ENCODE measurements at regions of chr1 and their contacts with region 1.

Region 1: GRCh38 chr1:150995896-150996295 is 10.8 kb downstream of the MINDY1 start:
- DNase-seq: peak; percentile 36
- H3K4me3 Mint-ChIP-seq: no peak overlapping the region
- H3K27ac Mint-ChIP-seq: peak overlapping the region; percentile 41
- H3K4me1 Mint-ChIP-seq: peaks cover 25% of the 10 kb centered on the region
- H3K27me3 Mint-ChIP-seq: no peaks in the 10 kb centered on the region

Region 2: GRCh38 chr1:150021191-150021694 is 974.7 kb before region 1 on chr1:
- CTCF ChIA-PET with region 1: no interaction called
- intact Hi-C with region 1: no loop called
- DNase-seq: no peak
- H3K4me3 Mint-ChIP-seq: no peak overlapping the region
- H3K27ac Mint-ChIP-seq: no peak overlapping the region
- H3K4me1 Mint-ChIP-seq: no peaks in the 10 kb centered on the region
- H3K27me3 Mint-ChIP-seq: no peaks in the 10 kb centered on the region

Region 3: GRCh38 chr1:150464422-150464826 is 531.5 kb before region 1 on chr1:
- CTCF ChIA-PET with region 1: no interaction called
- intact Hi-C with region 1: loop called (anchors 5 kb)
- DNase-seq: peak; percentile 79
- H3K4me3 Mint-ChIP-seq: no peak overlapping the region
- H3K27ac Mint-ChIP-seq: peak overlapping the region; percentile 41
- H3K4me1 Mint-ChIP-seq: peaks cover 2% of the 10 kb centered on the region
- H3K27me3 Mint-ChIP-seq: no peaks in the 10 kb centered on the region

Region 4: DNA sequence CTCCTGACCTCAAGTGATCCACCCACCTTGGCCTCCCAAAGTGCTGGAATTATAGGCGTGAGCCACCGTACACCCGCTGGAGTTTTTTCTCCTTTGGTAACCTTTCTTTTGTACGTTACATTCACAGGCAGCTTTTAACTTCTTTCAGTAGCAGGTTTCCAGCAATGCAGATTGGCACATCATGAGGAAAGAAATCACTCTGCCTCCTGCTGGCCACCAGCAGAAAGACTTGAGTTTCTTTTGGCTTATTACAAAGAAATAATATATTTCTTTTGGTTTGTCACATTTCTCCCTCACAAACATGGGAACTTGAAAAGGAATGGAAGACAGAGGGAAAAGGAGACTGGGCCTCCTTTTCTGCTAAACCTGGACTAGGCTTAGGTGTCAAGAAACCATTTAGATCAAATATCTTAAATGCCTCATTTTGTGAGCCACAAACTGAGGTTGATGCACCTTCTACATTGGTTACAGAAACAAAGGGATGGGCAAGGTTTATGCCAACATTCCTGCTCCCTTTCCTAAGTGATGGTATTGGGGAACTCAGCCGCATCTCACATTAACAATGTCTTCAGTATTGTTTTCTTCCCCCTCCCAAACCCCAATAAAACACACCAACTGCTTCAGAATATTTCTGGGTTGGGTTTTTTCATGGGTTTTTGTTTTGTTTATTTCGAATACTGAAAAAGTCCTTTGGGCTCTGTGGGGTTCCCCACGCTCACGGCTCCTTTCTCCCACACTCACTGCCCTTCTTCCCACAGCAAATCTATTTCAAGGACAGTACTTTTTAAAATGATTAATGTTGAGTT is 374.2 kb before region 1 on chr1:
- CTCF ChIA-PET with region 1: interaction called, 3 read pairs
- intact Hi-C with region 1: loop called (anchors 5 kb)
- DNase-seq: peak; percentile 78
- H3K4me3 Mint-ChIP-seq: peak overlapping the region; percentile 9
- H3K27ac Mint-ChIP-seq: peak overlapping the region; percentile 72
- H3K4me1 Mint-ChIP-seq: peaks cover 74% of the 10 kb centered on the region
- H3K27me3 Mint-ChIP-seq: no peaks in the 10 kb centered on the region

Region 5: DNA sequence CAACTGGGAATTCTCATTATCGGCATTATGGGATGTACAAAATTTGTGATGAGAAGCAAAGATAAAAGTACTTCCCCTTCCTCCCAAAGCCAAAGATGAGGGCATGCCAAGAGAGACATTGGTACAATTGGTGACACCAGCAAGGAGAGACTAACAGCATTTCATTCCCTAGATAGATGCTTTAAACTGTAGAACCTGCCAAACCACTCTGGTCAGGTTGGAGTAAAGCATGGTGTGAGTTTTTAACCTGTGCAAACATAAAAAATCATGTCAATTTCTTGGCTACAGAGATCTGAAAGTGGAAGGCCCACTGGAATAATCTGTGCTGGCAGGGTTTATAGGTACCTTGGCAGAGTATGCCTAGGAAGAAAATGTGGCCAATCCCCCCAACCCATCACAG is 89.6 kb before region 1 on chr1:
- CTCF ChIA-PET with region 1: no interaction called
- intact Hi-C with region 1: no loop called
- DNase-seq: no peak
- H3K4me3 Mint-ChIP-seq: no peak overlapping the region
- H3K27ac Mint-ChIP-seq: no peak overlapping the region
- H3K4me1 Mint-ChIP-seq: peaks cover 4% of the 10 kb centered on the region
- H3K27me3 Mint-ChIP-seq: no peaks in the 10 kb centered on the region